OCI-LY7 (cell line): ENCODE measurements at regions of chr3 and their contacts with region 1.

Region 1: GRCh38 chr3:183285828-183286457 is 32.9 kb downstream of the B3GNT5 start:
- DNase-seq: peak; percentile 46
- H3K4me3 ChIP-seq: no peak overlapping the region
- H3K27ac ChIP-seq: no peak overlapping the region
- H3K4me1 ChIP-seq: peaks cover 6% of the 10 kb centered on the region
- CTCF ChIP-seq: no peak

Region 2: GRCh38 chr3:183178629-183179549 is 107.1 kb before region 1 on chr3:
- CTCF ChIA-PET with region 1: no interaction called
- POLR2A ChIA-PET with region 1: no interaction called
- intact Hi-C with region 1: no loop called
- DNase-seq: no peak
- H3K4me3 ChIP-seq: no peak overlapping the region
- H3K27ac ChIP-seq: no peak overlapping the region
- H3K4me1 ChIP-seq: no peaks in the 10 kb centered on the region
- CTCF ChIP-seq: no peak

Region 3: GRCh38 chr3:183564046-183564445 is 278.1 kb after region 1 on chr3:
- CTCF ChIA-PET with region 1: no interaction called
- POLR2A ChIA-PET with region 1: no interaction called
- intact Hi-C with region 1: loop called (anchors 5 kb)
- DNase-seq: peak; percentile 51
- H3K4me3 ChIP-seq: peak overlapping the region; percentile 1
- H3K27ac ChIP-seq: peak overlapping the region; percentile 75
- H3K4me1 ChIP-seq: peaks cover 90% of the 10 kb centered on the region
- CTCF ChIP-seq: peak; percentile 26; the same call in 1 of the 2 replicates